Activated T-helper 1 cell treated with anti-CD3 and anti-CD28 coated beads, Interleukin-12 subunit alpha, Interleukin-12 subunit beta, Interleukin-2, Interleukin-4 antibody, amounts not matched to agents 30 ng/mL and 10 ng/mL and 1 ng/mL, durations not matched to agents 14 hours and 24 hours and 36 hours (primary cell): ENCODE measurements at regions of chr19 and their contacts with region 1.

Region 1: DNA sequence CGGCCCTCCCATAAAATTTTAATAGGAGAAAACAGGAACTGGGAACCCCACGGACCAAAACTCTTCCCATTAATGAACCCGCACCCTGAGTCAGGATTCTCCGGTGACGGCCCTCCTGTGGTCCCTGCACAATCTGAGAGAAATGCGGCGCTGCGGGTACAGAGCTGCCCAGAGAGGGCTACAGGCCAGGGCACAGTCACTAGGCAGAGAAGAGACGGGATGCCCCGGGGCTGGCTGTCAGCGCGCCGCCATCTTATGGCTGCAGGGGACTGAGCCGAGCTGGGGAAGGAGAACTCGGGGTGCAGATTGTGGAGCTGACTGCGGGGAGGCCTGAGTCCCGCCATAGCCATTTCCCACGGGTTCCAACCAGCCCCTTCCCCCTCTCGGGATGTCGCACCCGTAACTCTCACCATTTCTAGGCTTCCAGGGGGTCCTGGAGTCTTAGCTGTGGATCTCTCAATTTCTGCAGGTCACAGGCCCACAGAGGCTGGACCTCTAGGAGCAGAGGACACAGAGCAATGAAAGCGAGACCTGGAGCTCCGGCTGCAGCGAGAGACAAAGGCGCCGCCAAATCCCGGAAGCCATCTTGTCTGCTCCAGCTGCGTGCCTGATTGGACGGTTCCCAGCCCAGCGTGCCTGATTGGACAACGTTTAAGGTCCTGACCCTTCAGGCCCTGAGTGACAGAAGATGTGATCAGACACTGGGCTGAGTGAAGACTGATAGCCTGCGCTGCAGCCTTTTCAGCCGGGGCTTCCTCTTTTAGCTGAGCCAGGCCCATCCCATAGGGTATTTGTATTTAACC is at the start of gene ZNF675:
- DNase-seq: peak; percentile 82
- H3K4me3 Mint-ChIP-seq: peak within 1 kb of the TSS; percentile 99
- H3K27ac Mint-ChIP-seq: peak within 1 kb of the TSS; percentile 97
- H3K4me1 Mint-ChIP-seq: peaks cover 9% of the 10 kb centered on the region
- H3K27me3 Mint-ChIP-seq: no peaks in the 10 kb centered on the region
- total RNA-seq, gene ZNF675: 16.7 and 17.0 TPM in 2 replicates

Region 2: DNA sequence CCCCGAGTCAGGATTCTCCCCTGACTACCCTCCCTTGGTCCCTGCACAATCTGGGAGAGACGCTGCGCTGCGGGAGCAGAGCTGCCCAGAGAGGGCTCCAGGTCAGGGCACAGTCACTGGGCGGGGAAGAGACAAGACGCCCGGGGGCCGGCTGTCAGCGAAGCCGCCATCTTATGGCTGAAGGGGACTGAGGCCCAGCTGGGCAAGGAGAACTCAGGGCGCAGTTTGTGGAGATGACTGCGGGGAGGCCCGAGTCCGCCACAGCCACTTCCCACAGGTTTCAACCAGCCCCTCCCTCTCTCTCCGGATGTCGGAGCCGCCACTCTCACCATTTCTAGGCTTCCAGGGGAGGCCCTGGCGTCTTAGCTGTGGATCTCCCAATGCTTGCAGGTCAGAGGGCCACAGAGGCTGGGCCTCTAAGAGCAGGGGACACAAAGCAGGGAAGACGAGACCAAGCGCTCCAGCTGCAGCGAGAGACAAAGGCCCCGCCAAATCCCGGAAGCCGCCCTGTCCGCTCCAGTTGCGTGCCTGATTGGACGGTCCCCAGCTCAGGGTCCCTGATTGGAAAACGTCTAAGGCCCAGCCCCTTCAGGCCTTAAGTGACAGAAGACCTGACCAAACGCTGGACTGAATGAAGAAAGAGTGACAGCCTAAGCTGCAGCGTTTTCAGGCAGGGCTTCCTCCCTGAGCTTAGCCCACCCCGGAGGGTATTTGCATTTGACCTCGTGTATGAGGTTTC is 436.7 kb before region 1 on chr19 and contains the start of gene ZNF724:
- intact Hi-C with region 1: loop called (anchors 1 kb)
- DNase-seq: peak; percentile 87
- H3K4me3 Mint-ChIP-seq: peak within 1 kb of the TSS; percentile 93
- H3K27ac Mint-ChIP-seq: peak within 1 kb of the TSS; percentile 93
- H3K4me1 Mint-ChIP-seq: peaks cover 7% of the 10 kb centered on the region
- H3K27me3 Mint-ChIP-seq: no peaks in the 10 kb centered on the region
- total RNA-seq, gene ZNF724: 12.1 and 14.1 TPM in 2 replicates

Region 3: GRCh38 chr19:23273590-23274413 is 413.0 kb before region 1 on chr19:
- intact Hi-C with region 1: loop called (anchors 10 kb)
- DNase-seq: peak; percentile 86
- H3K4me3 Mint-ChIP-seq: peak overlapping the region; percentile 96
- H3K27ac Mint-ChIP-seq: peak overlapping the region; percentile 90
- H3K4me1 Mint-ChIP-seq: peaks cover 23% of the 10 kb centered on the region
- H3K27me3 Mint-ChIP-seq: no peaks in the 10 kb centered on the region

Region 4: GRCh38 chr19:23758187-23759074 is 71.6 kb after region 1 on chr19 and contains the start of gene ZNF681:
- intact Hi-C with region 1: loop called (anchors 1 kb)
- DNase-seq: peak; percentile 76
- H3K4me3 Mint-ChIP-seq: peak within 1 kb of the TSS; percentile 90
- H3K27ac Mint-ChIP-seq: peak within 1 kb of the TSS; percentile 83
- H3K4me1 Mint-ChIP-seq: peaks cover 13% of the 10 kb centered on the region
- H3K27me3 Mint-ChIP-seq: no peaks in the 10 kb centered on the region
- total RNA-seq, gene ZNF681: 3.0 and 3.3 TPM in 2 replicates

Region 5: GRCh38 chr19:23817519-23817918 is 130.7 kb after region 1 on chr19:
- intact Hi-C with region 1: no loop called
- DNase-seq: no peak
- H3K4me3 Mint-ChIP-seq: no peak overlapping the region
- H3K27ac Mint-ChIP-seq: no peak overlapping the region
- H3K4me1 Mint-ChIP-seq: no peaks in the 10 kb centered on the region
- H3K27me3 Mint-ChIP-seq: no peaks in the 10 kb centered on the region

Region 6: DNA sequence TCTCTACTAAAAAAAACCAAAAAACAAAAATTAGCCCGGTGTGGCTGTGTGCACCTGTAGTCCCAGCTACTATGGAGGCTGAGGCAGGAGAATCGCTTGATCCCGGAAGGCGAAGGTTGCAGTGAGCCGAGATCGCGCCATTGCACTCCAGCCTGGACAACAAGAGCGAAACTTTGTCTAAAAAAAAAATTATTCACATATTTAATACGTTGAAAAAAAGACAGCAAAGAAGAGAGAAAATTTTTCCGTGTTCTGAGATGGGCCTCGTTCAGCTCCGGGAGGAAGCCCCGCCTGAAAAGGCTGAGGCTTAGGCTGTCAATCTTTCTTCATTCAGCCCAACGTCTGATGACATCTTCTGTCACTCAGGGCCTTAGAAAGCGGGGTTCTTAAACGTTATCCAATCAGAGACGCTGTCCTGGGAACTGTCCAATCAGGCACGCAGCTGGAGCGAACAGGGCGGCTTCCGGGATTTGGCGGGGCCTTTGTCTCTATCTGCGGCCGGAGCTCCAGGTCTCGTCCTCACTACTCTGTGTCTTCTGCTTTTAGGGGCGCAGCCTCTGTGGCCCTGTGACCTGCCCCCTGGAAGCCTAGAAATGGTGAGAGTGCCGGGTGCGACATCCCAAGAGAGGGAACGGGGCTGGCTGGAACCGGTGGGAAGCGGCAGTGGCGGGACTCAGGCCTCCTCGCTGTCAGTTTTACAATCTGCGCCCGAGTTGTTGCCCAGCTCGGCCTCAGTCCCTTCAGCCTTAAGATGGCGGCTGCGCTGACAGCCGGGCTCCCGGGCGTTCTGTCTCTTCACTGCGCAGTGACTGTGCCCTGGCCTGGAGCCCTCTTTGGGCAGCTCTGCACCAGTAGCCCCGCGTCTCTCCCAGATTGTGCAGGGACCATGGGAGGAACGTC is 227.8 kb after region 1 on chr19 and contains the start of gene ZNF726:
- intact Hi-C with region 1: loop called (anchors 2 kb)
- DNase-seq: peak; percentile 82
- H3K4me3 Mint-ChIP-seq: peak within 1 kb of the TSS; percentile 95
- H3K27ac Mint-ChIP-seq: peak within 1 kb of the TSS; percentile 95
- H3K4me1 Mint-ChIP-seq: no peaks in the 10 kb centered on the region
- H3K27me3 Mint-ChIP-seq: no peaks in the 10 kb centered on the region
- total RNA-seq, gene ZNF726: 10.7 and 12.6 TPM in 2 replicates

Region 7: GRCh38 chr19:24033301-24033962 is 346.6 kb after region 1 on chr19:
- intact Hi-C with region 1: loop called (anchors 5 kb)
- DNase-seq: peak; percentile 76
- H3K4me3 Mint-ChIP-seq: peak overlapping the region; percentile 100
- H3K27ac Mint-ChIP-seq: peak overlapping the region; percentile 98
- H3K4me1 Mint-ChIP-seq: peaks cover 26% of the 10 kb centered on the region
- H3K27me3 Mint-ChIP-seq: no peaks in the 10 kb centered on the region

Region 8: DNA sequence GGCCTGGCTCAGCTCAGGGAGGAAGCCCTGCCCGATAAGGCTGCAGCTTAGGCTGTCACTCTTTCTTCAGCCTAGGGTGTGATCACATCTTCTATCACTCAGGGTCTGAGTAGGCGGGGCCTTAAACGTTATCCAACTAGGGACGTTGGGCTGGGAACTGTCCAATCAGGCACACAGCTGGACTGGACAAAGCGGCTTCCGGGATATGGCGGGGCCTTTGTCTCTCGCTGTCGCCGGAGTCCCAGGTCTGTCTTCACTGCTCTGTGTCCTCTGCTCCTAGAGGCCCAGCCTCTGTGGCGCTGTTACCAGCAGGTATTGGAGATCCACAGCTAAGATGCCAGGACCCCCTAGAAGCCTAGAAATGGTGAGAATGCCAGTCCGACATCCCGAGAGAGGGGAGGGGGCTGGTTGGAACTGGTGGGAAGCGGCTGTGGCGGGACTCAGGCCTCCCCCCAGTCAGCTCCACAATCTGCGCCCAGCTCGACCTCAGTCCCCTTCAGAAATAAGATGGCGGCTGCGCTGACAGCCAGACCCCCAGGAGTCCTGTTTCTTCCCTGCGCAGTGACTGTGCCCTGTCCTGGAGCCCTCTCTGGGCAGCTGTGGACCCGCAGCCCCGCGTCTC is 400.3 kb after region 1 on chr19 and contains the start of gene ZNF254:
- intact Hi-C with region 1: loop called (anchors 5 kb)
- DNase-seq: peak; percentile 77
- H3K4me3 Mint-ChIP-seq: peak within 1 kb of the TSS; percentile 95
- H3K27ac Mint-ChIP-seq: peak within 1 kb of the TSS; percentile 95
- H3K4me1 Mint-ChIP-seq: no peaks in the 10 kb centered on the region
- H3K27me3 Mint-ChIP-seq: no peaks in the 10 kb centered on the region
- total RNA-seq, gene ZNF254: 7.8 and 8.4 TPM in 2 replicates